Heart left ventricle (tissue), 16 donors: ENCODE measurements at regions of chr4 and their contacts with region 1.

Region 1: DNA sequence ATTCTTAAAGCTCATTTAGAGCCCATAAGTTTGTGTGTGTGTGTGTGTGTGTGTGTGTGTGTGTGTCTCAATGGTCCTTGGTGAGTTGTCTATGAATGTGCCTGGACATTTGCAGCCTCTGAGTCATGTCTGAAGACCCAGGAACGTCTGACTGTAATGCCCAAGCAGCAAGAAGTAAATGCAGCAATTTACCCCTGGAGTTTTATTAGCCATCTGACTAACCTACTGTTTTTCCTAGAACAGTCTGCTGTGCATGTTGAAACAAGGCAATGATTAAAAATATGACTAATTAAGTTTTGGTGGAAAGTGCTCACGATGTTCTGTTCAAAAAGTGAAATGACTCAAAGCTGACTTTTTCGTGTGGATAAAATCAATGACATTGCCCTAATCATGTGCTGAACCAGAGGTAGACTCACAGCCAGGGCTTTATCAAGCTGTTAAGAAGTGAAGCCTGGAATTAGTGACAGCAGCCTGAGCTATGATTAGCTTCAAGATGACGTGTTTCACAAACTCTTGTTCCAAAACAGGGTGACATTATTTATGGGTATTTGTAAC is 201.6 kb downstream of the CPE start:
- DNase-seq: peak in 3 of 5 donors; percentile 12 to 60 (median 21)
- ATAC-seq: peak; percentile 95 to 98 (median 96)
- H3K4me3 ChIP-seq: no peak overlapping the region
- H3K27ac ChIP-seq: peak overlapping the region; percentile 45 to 83 (median 66)
- H3K4me1 ChIP-seq: peaks cover 0 to 10% (median 0%) of the 10 kb centered on the region in 12 donors
- H3K27me3 ChIP-seq: no peaks in the 10 kb centered on the region
- CTCF ChIP-seq: no peak
- POLR2A ChIP-seq: no peak

Region 2: DNA sequence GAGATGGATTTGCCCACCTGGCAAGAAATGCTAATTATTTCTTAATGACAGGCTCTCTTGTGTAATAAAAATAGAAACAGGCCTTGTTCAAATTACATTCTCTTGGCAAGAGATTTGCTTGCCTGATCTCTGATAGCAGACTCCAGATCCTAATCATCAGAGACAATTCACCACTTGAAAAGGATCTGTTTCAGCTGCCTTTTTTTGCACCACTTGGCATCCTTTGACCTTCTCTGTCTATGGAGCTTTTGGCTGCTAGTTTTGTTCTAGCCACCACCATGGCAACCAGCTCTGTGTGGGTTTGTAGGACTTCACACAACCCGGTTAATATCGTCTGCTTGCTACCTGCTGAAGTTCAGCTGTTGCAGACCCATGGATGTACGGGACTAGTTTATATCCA is 51.5 kb after region 1 on chr4:
- intact Hi-C with region 1: loop called in 2 of 10 experiments (anchors 2 kb)
- DNase-seq: no peak
- ATAC-seq: peak; percentile 65 to 82 (median 72)
- H3K4me3 ChIP-seq: no peak overlapping the region
- H3K27ac ChIP-seq: peak overlapping the region in 4 of 12 donors; percentile 37 to 76 (median 62)
- H3K4me1 ChIP-seq: peaks cover 0 to 12% (median 1%) of the 10 kb centered on the region in 12 donors
- H3K27me3 ChIP-seq: no peaks in the 10 kb centered on the region
- CTCF ChIP-seq: no peak
- POLR2A ChIP-seq: no peak

Region 3: GRCh38 chr4:165873298-165874071 is 293.1 kb after region 1 on chr4:
- intact Hi-C with region 1: no loop called
- DNase-seq: peak; percentile 25 to 66 (median 29)
- ATAC-seq: peak in 3 of 4 donors; percentile 52 to 87 (median 82)
- H3K4me3 ChIP-seq: peak overlapping the region; percentile 37 to 73 (median 60)
- H3K27ac ChIP-seq: peak overlapping the region in 6 of 12 donors; percentile 19 to 55 (median 35)
- H3K4me1 ChIP-seq: peaks cover 0 to 28% (median 2%) of the 10 kb centered on the region in 12 donors
- H3K27me3 ChIP-seq: peaks cover 0 to 41% (median 0%) of the 10 kb centered on the region in 9 donors
- CTCF ChIP-seq: no peak
- POLR2A ChIP-seq: no peak